RWPE1 (cell line): ENCODE measurements at regions of chr17 and their contacts with region 1.

Region 1: DNA sequence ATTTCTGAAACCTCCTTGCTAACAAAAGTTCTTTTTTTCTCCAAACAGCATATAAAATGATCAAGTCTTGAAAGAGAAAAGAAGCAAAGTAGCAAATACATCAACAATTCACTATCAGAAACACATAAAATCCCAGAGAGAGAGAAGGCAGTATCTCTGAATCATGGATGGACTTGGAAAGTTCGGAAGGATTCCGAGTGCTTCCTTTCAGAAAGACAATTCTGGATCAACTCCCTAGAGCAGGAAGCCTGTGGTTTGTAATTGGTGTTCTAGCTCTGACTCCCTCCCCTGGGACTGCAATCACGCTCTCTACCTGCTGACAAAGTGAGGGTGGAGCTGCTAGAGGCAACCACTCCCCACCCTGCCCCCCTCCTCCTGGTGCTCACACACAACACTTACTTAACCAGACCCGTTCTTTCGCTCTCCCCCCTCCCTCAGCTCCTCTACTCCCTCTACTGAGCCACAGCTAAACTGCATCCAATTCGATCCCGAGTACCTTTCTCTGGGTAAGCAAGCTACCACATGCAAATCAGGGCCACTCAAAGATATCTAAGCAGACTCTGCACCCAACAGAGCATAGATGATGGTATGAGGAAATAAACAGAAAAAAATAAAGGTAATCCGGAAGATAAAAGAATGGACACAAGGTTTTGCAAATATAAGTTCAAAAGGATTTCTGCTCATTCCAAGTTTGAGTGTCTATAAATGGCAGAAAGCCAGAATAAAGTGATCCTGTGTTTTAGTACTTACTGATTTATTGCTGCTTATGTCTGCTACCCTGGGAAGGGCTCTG is at the start of gene RNF43:
- DNase-seq: peak; percentile 99
- H3K27ac ChIP-seq: peak within 1 kb of the TSS; percentile 61
- CTCF ChIP-seq: peak; percentile 95

Region 2: GRCh38 chr17:58352014-58352842 is 65.3 kb before region 1 on chr17 and contains the start of gene SUPT4H1:
- CTCF ChIA-PET with region 1: interaction called, 5 read pairs
- POLR2A ChIA-PET with region 1: interaction called, 21 read pairs
- DNase-seq: peak; percentile 96
- H3K27ac ChIP-seq: peak within 1 kb of the TSS; percentile 86
- CTCF ChIP-seq: no peak

Region 3: DNA sequence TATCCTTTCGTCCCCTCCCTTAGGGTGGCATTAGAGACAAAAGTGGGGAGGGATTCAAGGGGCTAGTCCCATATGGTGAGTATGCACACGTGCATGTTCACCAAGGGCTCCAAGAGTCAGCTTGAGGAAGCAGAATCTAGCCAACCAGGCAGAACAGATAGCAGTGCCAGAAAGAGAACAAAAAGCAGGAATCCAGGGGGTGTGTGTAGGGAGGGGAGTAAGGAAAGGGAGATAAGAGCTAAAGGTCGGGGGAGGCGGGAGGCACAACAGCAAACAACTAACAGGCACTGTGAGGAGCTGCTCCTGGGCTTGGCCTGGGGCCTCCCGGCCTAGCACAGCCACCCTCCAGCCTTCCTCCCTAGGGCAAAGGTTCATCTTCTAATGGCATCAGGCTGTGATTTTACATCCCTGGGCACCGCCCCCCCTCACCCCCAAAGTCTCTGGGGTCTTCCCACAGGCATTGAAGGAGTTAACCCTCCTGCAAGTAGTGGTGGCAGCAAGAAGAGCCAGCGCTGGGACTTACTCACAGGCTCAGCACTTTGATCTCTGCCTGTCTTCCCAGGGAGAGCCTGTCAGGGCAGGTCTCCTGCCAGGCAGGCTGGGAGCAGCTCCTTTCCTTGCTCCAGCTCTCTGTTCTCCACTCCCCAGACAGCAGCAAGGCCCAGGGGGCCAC is 53.1 kb before region 1 on chr17:
- CTCF ChIA-PET with region 1: interaction called, 10 read pairs
- POLR2A ChIA-PET with region 1: no interaction called
- DNase-seq: peak; percentile 56
- H3K27ac ChIP-seq: peak overlapping the region; percentile 62
- CTCF ChIP-seq: no peak

Region 4: GRCh38 chr17:58377093-58377601 is 40.3 kb before region 1 on chr17:
- CTCF ChIA-PET with region 1: no interaction called
- POLR2A ChIA-PET with region 1: no interaction called
- DNase-seq: no peak
- H3K27ac ChIP-seq: no peak overlapping the region
- CTCF ChIP-seq: no peak

Region 5: DNA sequence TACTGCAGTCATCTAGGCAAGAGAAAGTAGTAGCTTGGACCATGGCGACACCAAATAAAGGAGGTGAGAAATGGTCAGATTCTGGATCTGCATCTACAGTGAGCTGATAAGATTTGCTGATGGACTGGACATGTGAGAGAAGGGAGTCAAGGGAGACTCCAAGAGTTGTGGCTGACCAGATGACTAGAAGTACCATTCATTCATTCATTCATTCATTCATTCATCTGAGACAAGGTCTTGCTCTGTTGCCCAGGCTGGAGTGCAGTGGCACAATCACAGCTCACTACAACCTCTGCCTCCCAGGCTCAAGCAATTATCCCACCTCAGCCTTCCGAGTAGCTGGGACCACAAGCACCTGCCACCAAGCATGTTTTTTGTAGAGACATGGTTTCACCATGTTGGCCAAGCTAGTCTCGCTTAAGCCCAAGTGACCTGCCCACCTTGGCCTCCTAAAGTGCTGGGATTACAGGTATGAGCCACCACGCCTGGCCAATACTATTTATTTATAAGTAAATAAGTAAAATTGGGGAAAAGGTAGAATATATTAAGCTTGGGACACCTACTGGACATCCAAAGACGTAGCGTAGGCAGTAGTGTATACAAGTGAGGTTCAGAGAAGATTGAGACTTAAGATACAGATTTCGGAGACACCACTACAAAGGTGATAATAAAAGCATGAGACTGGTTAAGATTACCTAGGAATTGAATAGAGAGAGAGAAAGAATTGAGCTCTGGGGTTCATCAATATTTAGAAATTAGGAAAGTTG is 15.5 kb after region 1 on chr17:
- CTCF ChIA-PET with region 1: no interaction called
- POLR2A ChIA-PET with region 1: no interaction called
- DNase-seq: no peak
- H3K27ac ChIP-seq: no peak overlapping the region
- CTCF ChIP-seq: no peak

Region 6: GRCh38 chr17:58513965-58514774 is 96.7 kb after region 1 on chr17 and contains the start of gene MTMR4:
- CTCF ChIA-PET with region 1: no interaction called
- POLR2A ChIA-PET with region 1: no interaction called
- DNase-seq: peak; percentile 83
- H3K27ac ChIP-seq: peak within 1 kb of the TSS; percentile 76
- CTCF ChIP-seq: no peak